CD8-positive, alpha-beta T cell (primary cell): ENCODE measurements at regions of chr11 and their contacts with region 1.

Region 1: GRCh38 chr11:9015677-9016076 is 11.9 kb upstream of the NRIP3 start:
- DNase-seq: peak; percentile 19 to 78 (median 55)
- ATAC-seq: peak; percentile 71
- H3K4me3 ChIP-seq: no peak overlapping the region
- H3K4me3 Mint-ChIP-seq: no peak overlapping the region
- H3K27ac ChIP-seq: no peak overlapping the region
- H3K27ac Mint-ChIP-seq: no peak overlapping the region
- H3K4me1 ChIP-seq: peaks cover 5% of the 10 kb centered on the region
- H3K4me1 Mint-ChIP-seq: peaks cover 12% of the 10 kb centered on the region
- H3K27me3 ChIP-seq: peaks cover 0 to 3% of the 10 kb centered on the region in 2 experiments
- H3K27me3 Mint-ChIP-seq: peaks cover 2% of the 10 kb centered on the region
- CTCF ChIP-seq: peak; percentile 73

Region 2: GRCh38 chr11:8998017-8998416 is 17.7 kb before region 1 on chr11:
- CTCF ChIA-PET with region 1: interaction called, 10 read pairs
- POLR2A ChIA-PET with region 1: no interaction called
- intact Hi-C with region 1: no loop called
- DNase-seq: no peak
- ATAC-seq: no peak
- H3K4me3 ChIP-seq: no peak overlapping the region
- H3K4me3 Mint-ChIP-seq: no peak overlapping the region
- H3K27ac ChIP-seq: no peak overlapping the region
- H3K27ac Mint-ChIP-seq: no peak overlapping the region
- H3K4me1 ChIP-seq: peaks cover 4% of the 10 kb centered on the region
- H3K4me1 Mint-ChIP-seq: peaks cover 6% of the 10 kb centered on the region
- H3K27me3 ChIP-seq: peaks cover 7 to 24% of the 10 kb centered on the region in 2 experiments
- H3K27me3 Mint-ChIP-seq: peaks cover 41% of the 10 kb centered on the region
- CTCF ChIP-seq: no peak

Region 3: DNA sequence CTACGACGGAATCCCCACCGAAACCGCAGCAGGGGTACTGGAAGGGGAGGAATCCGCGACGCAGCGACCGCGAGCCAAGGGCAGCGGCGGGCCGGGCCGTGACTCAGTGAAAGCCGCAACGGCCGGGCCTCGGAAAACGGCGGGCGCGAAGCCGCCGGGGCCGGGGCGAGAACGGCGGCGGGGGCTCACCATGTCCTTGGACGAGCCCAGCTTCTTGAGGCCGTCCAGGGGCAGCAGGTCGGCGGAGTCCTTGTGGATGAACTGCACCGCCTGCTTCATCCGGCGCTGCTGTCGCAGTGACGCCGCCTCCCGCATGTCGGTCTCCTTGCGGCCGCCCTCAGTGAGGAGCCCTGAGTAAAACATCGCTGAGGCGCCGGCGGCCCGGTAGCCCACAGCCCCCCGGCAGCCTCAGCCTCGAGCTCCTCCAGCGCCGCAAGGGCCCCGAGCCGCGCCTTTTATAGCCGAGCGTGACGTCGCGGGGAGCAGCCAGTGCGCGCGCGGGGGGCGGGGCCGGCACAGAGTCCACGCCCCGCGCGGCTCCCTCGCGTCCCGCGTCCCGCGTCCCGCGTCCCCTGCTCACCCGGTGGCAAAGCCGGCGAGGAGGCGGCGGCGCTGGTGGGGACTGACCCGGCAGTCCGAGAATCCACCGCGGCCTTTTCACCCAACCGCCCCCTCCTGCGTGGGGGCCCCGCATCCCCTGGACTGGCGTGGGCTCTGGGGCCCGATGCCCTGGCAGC is 11.9 kb before region 1 on chr11 and contains the start of gene NRIP3:
- CTCF ChIA-PET with region 1: interaction called, 13 read pairs
- POLR2A ChIA-PET with region 1: no interaction called
- intact Hi-C with region 1: no loop called
- DNase-seq: peak; percentile 58 to 91 (median 82)
- ATAC-seq: peak; percentile 92
- H3K4me3 ChIP-seq: peak within 1 kb of the TSS; percentile 47 to 66
- H3K4me3 Mint-ChIP-seq: peak within 1 kb of the TSS; percentile 76
- H3K27ac ChIP-seq: no peak within 1 kb of the TSS
- H3K27ac Mint-ChIP-seq: peak within 1 kb of the TSS; percentile 24
- H3K4me1 ChIP-seq: peaks cover 10% of the 10 kb centered on the region
- H3K4me1 Mint-ChIP-seq: peaks cover 15% of the 10 kb centered on the region
- H3K27me3 ChIP-seq: peaks cover 7 to 24% of the 10 kb centered on the region in 2 experiments
- H3K27me3 Mint-ChIP-seq: peaks cover 32% of the 10 kb centered on the region
- CTCF ChIP-seq: no peak
- total RNA-seq, gene NRIP3: 8.8 to 10.1 TPM

Region 4: GRCh38 chr11:9030601-9031000 is 14.9 kb after region 1 on chr11:
- CTCF ChIA-PET with region 1: interaction called, 31 read pairs
- POLR2A ChIA-PET with region 1: no interaction called
- intact Hi-C with region 1: no loop called
- DNase-seq: no peak
- ATAC-seq: no peak
- H3K4me3 ChIP-seq: no peak overlapping the region
- H3K4me3 Mint-ChIP-seq: no peak overlapping the region
- H3K27ac ChIP-seq: no peak overlapping the region
- H3K27ac Mint-ChIP-seq: no peak overlapping the region
- H3K4me1 ChIP-seq: no peaks in the 10 kb centered on the region
- H3K4me1 Mint-ChIP-seq: no peaks in the 10 kb centered on the region
- H3K27me3 ChIP-seq: no peaks in the 10 kb centered on the region
- H3K27me3 Mint-ChIP-seq: peaks cover 4% of the 10 kb centered on the region
- CTCF ChIP-seq: no peak

Region 5: GRCh38 chr11:9137293-9138132 is 121.8 kb after region 1 on chr11:
- CTCF ChIA-PET with region 1: interaction called, 27 read pairs
- POLR2A ChIA-PET with region 1: no interaction called
- intact Hi-C with region 1: loop called (anchors 1 to 5 kb)
- DNase-seq: peak; percentile 28 to 76 (median 62)
- ATAC-seq: peak; percentile 96
- H3K4me3 ChIP-seq: no peak overlapping the region
- H3K4me3 Mint-ChIP-seq: no peak overlapping the region
- H3K27ac ChIP-seq: no peak overlapping the region
- H3K27ac Mint-ChIP-seq: no peak overlapping the region
- H3K4me1 ChIP-seq: no peaks in the 10 kb centered on the region
- H3K4me1 Mint-ChIP-seq: peaks cover 9% of the 10 kb centered on the region
- H3K27me3 ChIP-seq: no peaks in the 10 kb centered on the region
- H3K27me3 Mint-ChIP-seq: no peaks in the 10 kb centered on the region
- CTCF ChIP-seq: peak; percentile 77